ENCODE measurements at regions of chr17 and their contacts with region 1.

Region 1: DNA sequence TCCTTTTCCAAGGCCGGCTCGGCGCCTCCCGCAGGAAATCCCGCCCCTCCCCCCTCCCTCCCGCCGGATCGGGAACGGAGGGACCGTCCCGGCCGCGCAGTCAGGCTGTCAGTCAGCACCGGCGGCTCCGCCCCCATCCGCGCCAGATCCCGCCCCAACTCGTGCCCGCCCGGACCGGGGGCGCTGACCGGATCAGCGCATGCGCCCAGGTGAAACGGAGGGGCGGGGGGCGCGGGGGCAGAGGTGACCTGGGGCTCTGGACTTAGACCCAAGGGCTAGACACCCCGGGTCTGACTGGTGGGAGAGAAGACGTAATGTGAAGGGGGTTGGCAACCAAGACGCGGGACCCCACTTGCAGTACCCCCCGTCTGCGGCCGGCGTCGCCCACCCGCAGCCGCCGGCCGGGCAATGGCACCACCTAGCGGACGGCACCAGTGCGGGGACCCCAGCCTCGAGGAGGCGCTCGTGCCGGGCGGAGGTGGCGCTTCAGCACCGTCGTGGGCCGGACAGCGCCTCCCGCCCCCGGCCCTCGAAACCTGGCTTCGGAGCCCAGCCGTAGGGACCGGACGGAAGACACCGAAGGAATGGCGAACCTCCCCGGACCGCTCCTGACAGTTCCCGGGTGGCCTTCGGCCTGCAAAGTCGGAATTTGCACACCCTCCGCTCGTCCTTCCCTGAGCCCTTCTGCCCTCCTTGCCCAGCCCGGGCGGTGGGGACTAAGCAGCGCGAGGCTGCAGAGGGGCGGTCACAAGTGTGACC is at the start of gene CASKIN2:
- DNase-seq: peak; percentile 99
- ATAC-seq: peak; percentile 93
- total RNA-seq, gene CASKIN2: 127 TPM

Region 2: DNA sequence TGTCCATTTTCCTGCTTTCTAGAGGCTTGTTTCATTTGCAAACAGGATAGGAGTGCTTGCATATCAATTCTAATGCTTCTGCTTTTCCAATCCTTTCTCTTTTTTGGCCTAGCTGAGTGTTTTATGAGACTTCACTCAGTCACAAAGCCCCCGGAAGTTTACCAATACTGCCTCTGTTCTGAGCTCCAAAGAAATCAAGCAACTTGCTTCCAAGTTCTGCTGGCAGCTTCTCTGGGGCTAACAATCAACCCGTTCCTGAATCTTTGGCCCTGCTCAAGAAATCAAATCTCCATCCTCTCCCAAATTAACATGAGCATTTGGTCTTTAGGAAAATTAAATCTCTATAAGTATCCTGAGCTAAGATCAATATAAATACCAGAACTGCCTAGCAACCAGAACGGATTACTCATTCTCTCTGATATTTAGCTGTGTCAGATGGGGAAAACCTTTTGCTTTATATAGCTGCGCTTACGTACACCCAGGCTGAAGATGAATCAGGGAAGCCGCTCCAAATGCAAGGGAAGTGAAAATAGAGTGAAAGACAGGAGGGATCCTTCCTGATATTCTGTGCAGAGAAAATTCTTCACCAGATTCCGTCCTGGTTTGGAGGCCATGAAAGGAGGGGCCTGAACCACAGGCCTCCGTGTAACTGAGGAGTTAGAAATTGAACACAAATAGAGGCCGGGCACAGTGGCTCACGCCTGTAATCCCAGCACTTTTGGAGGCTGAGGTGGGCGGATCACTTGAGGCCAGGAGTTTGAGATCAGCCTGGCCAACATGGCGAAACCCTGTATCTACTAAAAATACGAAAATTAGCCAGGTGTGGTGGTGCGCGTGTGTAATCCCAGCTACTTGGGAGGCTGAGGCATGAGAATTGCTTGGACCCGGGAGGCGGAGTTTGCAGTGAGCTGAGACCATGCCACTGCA is 86.9 kb before region 1 on chr17:
- intact Hi-C with region 1: loop called (anchors 5 kb)
- DNase-seq: no peak
- ATAC-seq: peak; percentile 43

Region 3: GRCh38 chr17:75468291-75468754 is 47.4 kb before region 1 on chr17:
- intact Hi-C with region 1: no loop called
- DNase-seq: no peak
- ATAC-seq: peak; percentile 43

Region 4: DNA sequence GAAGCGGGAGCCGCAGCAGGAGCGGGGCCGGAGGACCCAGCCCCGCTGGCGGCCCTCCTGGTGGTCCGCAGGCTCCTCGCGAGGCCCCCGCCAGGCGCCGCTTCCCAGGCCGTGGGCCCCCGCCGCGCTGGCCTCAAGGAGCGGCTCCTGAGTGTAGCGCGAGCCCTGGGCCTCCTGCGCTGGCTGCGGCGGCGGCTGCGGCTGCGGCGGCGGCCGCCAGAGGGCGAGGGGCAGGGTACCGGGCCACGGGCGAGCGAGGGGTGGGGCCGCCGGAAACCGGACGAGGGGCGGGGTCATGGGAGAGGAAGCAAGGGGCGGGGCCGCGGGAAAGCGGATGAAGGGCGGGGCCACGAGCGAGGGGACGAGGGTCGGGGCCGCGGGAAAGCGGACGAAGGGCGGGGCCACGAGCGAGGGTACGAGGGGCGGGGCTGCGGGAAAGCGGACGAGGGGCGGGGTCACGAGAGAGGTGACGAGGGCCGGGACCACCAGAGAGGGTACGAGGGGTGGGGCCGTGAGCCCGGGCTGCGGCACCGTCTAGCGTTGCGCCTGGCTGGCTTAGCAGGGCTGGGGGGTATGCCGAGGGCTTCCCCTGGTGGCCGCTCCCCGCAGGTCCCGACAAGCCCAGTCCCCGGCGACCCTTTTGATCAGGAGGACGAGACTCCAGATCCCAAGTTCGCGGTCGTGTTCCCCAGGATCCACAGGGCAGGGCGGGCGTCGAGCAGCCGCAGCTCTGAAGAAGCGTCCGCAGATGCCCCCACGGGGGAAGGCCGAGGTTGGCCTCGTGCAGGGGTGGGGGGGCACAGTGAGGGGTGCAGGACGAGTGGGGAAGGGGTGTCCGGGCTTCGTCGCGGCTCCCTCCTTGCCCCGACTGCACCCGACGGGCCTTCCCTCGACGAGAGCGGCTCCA is 73.6 kb after region 1 on chr17:
- intact Hi-C with region 1: loop called (anchors 2 kb)
- DNase-seq: peak; percentile 99
- ATAC-seq: peak; percentile 91

Region 5: GRCh38 chr17:75596320-75597087 is 80.8 kb after region 1 on chr17:
- intact Hi-C with region 1: loop called (anchors 1 kb)
- DNase-seq: peak; percentile 54
- ATAC-seq: no peak

Region 6: GRCh38 chr17:75619506-75620431 is 104.1 kb after region 1 on chr17:
- intact Hi-C with region 1: no loop called
- DNase-seq: no peak
- ATAC-seq: no peak

Measured in sciatic nerve (tissue), 2 donors.